ENCODE measurements at regions of chr4 and their contacts with region 1.

Region 1: DNA sequence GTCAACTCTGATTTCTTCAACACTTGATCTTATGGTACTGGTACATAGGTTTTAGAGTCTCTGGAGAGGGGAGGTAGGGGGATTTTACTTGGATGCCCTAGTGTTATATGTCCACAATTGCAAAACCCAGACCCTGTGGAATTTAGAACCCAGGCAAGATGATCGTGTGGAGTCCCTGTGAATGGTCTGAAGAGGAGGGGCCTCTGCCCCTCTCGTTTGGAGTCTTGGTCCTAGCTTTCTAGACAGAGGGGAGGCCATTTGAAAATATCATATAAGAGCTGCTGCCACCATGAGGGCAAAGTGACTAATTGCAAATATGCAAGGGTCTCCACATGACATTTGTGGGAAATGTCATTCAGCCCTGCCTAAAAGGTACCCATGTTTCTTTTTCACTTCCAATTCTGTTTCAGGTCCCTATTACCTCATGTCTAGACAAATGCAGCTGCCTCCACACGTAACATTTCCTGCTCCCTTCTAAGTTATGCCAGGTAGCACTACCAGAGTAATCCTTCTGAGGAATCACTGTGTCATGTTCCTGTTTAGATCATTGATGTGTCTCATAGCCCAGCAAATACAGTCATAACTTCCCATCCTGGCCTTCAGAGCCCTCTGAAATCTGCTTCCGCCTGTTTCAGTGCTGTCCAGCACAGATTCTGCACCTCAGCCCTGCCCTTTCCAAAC is 126.8 kb downstream of the KLHL8 start:
- DNase-seq: no peak
- H3K4me3 ChIP-seq: no peak overlapping the region
- CTCF ChIP-seq: peak; percentile 46

Region 2: DNA sequence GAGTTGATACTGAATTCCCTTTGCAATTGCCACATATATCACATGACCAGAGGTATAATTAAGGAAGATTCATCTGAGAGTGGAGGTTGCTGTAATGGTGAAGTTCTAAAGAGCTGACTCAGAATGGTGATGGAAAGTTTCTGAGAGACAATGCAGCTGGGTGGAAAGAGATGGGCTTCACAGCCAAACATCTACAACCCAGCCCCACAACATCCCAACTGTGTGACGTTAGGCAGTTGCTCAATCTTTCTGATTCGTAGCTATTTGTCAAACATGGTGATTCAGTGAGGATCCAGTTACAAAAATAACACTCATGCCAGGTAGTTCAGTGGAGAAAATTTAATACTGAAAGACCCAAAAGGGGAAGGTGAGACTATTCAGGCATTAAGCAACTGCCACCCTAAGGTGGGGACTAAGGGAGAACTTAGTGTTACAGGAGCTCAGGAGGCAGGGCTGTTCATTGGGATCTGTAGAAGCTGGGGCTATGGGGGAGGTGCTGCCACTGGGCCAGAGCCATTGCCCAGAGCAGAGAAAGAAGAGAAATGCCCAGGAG is 165.7 kb before region 1 on chr4:
- CTCF ChIA-PET with region 1: interaction called, 144 read pairs
- POLR2A ChIA-PET with region 1: interaction called, 3 read pairs
- DNase-seq: peak; percentile 92
- H3K4me3 ChIP-seq: no peak overlapping the region
- CTCF ChIP-seq: no peak

Region 3: DNA sequence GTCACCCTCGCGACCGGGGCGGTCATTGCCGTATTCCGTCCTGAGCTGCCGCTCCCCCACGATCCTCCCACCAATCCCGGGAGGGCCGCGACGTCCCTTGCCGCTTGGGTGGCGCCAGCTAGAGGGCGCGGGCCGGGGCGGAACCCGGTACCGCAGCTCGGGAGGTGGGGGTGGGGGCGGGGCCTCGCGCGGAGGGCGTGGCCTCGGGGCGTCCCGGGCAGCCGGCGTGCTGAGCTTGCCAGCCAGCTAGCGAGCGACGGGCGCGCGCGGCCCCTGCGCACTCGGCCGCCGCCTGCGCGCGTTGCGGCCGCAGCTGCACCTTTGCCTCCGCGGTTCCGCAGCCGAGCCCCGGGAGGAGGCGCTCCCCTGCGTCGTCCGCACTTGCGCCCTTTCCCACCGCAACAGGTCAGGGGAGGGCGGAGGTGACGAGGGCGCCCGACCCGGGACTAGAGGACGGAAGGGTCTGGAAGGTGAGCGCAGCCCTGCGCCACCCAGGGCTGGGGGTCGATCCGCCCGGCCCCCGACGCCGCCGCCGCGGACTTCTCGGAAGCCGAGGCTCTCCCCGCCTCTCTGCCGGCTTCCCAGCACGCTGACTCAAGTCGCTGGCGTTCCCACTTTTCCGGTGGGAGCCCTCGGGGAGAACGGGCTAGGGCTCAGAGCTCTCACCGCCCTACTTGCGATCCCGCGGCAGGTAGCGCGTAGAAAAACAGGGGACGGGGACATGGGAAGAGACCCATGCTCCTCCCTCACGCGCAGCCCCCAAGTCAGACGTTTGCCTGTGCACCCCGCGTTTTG is 158.6 kb before region 1 on chr4 and contains the start of gene AFF1:
- CTCF ChIA-PET with region 1: interaction called, 19 read pairs
- POLR2A ChIA-PET with region 1: no interaction called
- DNase-seq: no peak
- H3K4me3 ChIP-seq: peak within 1 kb of the TSS; percentile 83
- CTCF ChIP-seq: peak; percentile 59

Region 4: GRCh38 chr4:87006676-87007527 is 86.7 kb before region 1 on chr4:
- CTCF ChIA-PET with region 1: interaction called, 14 read pairs
- POLR2A ChIA-PET with region 1: interaction called, 7 read pairs
- DNase-seq: peak; percentile 58
- H3K4me3 ChIP-seq: peak overlapping the region; percentile 79
- CTCF ChIP-seq: no peak

Region 5: GRCh38 chr4:87078987-87079486 is 14.5 kb before region 1 on chr4:
- CTCF ChIA-PET with region 1: interaction called, 20 read pairs
- POLR2A ChIA-PET with region 1: no interaction called
- DNase-seq: no peak
- H3K4me3 ChIP-seq: no peak overlapping the region
- CTCF ChIP-seq: no peak

Region 6: DNA sequence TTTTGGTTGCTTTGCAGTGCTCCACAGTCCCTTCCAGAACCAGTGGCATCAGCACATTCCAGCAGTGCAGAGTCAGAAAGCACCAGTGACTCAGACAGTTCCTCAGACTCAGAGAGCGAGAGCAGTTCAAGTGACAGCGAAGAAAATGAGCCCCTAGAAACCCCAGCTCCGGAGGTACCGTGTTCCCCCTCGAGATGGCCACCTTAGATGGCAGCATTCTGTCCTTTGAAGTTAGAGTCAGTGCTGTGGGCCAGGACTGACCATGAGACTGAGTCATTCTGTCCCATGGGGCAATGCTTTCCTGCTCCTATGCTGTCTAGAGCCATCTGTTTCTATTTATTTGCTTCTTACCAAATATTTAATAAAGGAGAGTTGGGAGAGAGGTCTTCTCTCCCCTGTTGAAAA is 14.6 kb after region 1 on chr4:
- CTCF ChIA-PET with region 1: interaction called, 21 read pairs
- POLR2A ChIA-PET with region 1: no interaction called
- DNase-seq: no peak
- H3K4me3 ChIP-seq: peak overlapping the region; percentile 40
- CTCF ChIP-seq: no peak

Region 7: GRCh38 chr4:87425711-87426110 is 332.1 kb after region 1 on chr4:
- CTCF ChIA-PET with region 1: no interaction called
- POLR2A ChIA-PET with region 1: no interaction called
- DNase-seq: no peak
- H3K4me3 ChIP-seq: no peak overlapping the region
- CTCF ChIP-seq: no peak

Measured in AG04449 (cell line).